SK-N-SH (cell line): ENCODE measurements at regions of chr2 and their contacts with region 1.

Region 1: GRCh38 chr2:218245214-218245613 is 15.6 kb upstream of the GPBAR1 start:
- DNase-seq: no peak
- H3K4me3 ChIP-seq: no peak overlapping the region
- H3K27ac ChIP-seq: no peak overlapping the region
- H3K4me1 ChIP-seq: no peaks in the 10 kb centered on the region
- H3K27me3 ChIP-seq: no peaks in the 10 kb centered on the region
- CTCF ChIP-seq: no peak
- EP300 ChIP-seq: no peak
- RAD21 ChIP-seq: no peak

Region 2: GRCh38 chr2:218060118-218060517 is 185.1 kb before region 1 on chr2:
- CTCF ChIA-PET with region 1: no interaction called
- POLR2A ChIA-PET with region 1: no interaction called
- DNase-seq: no peak
- H3K4me3 ChIP-seq: no peak overlapping the region
- H3K27ac ChIP-seq: no peak overlapping the region
- H3K4me1 ChIP-seq: peaks cover 0 to 13% of the 10 kb centered on the region in 2 experiments; a peak in 1 of 4 replicates
- H3K27me3 ChIP-seq: peaks cover 27% of the 10 kb centered on the region; the same call in 1 of the 2 replicates
- CTCF ChIP-seq: no peak
- EP300 ChIP-seq: no peak
- RAD21 ChIP-seq: no peak

Region 3: DNA sequence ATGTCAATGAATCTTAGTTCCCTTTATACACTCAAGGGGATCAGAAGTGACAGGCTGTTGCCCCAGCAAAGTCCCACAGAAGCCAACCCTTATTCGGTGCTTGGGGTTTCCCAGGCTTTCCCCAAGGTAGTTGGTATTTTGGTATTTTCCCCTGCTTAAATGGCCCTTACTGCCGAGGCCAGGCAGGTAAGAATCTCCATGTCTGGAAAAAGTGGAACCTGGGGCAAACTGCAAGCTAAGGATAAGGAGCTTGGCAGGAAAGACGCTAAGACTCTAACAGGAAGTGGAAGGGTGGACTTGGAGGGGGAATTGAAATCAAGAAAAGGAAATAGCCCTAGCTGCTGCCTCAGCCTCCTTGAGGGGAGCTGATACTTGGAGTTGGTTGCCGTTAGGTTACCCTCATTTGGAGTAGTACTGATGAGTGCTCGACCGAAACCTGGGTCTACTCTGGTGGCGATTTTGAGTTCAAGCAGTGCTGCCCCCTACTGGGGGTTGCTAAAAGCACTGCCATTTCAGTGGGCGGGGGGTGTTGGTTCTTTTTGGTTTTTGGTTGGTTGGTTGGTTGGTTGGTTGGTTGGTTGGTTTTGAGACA is 12.3 kb after region 1 on chr2:
- CTCF ChIA-PET with region 1: interaction called, 34 read pairs
- POLR2A ChIA-PET with region 1: no interaction called
- DNase-seq: peak; percentile 51
- H3K4me3 ChIP-seq: no peak overlapping the region
- H3K27ac ChIP-seq: no peak overlapping the region; a peak in 1 of 4 replicates
- H3K4me1 ChIP-seq: peaks cover 11 to 41% of the 10 kb centered on the region in 2 experiments
- H3K27me3 ChIP-seq: no peaks in the 10 kb centered on the region
- CTCF ChIP-seq: peak; percentile 76
- EP300 ChIP-seq: no peak
- RAD21 ChIP-seq: no peak